Activated CD4-positive, alpha-beta memory T cell treated with anti-CD3 and anti-CD28 coated beads, Interleukin-2, amount 10 ng/mL, durations not matched to agents 7 days and 5 days (primary cell): ENCODE measurements at regions of chr14 and their contacts with region 1.

Region 1: GRCh38 chr14:24710403-24711112 is 76.6 kb upstream of the GZMB start:
- DNase-seq: peak; percentile 69
- H3K4me3 Mint-ChIP-seq: no peak overlapping the region
- H3K27ac Mint-ChIP-seq: no peak overlapping the region
- H3K4me1 Mint-ChIP-seq: no peaks in the 10 kb centered on the region
- H3K27me3 Mint-ChIP-seq: peaks cover 1% of the 10 kb centered on the region

Region 2: GRCh38 chr14:24673534-24674203 is 36.9 kb before region 1 on chr14:
- CTCF ChIA-PET with region 1: interaction called, 16 read pairs
- POLR2A ChIA-PET with region 1: interaction called, 3 read pairs
- DNase-seq: peak; percentile 83
- H3K4me3 Mint-ChIP-seq: peak overlapping the region; percentile 76
- H3K27ac Mint-ChIP-seq: peak overlapping the region; percentile 97
- H3K4me1 Mint-ChIP-seq: peaks cover 88% of the 10 kb centered on the region
- H3K27me3 Mint-ChIP-seq: no peaks in the 10 kb centered on the region

Region 3: GRCh38 chr14:24690492-24690891 is 20.1 kb before region 1 on chr14:
- CTCF ChIA-PET with region 1: interaction called, 21 read pairs
- POLR2A ChIA-PET with region 1: interaction called, 5 read pairs
- DNase-seq: no peak
- H3K4me3 Mint-ChIP-seq: no peak overlapping the region
- H3K27ac Mint-ChIP-seq: no peak overlapping the region
- H3K4me1 Mint-ChIP-seq: peaks cover 31% of the 10 kb centered on the region
- H3K27me3 Mint-ChIP-seq: peaks cover 1% of the 10 kb centered on the region

Region 4: DNA sequence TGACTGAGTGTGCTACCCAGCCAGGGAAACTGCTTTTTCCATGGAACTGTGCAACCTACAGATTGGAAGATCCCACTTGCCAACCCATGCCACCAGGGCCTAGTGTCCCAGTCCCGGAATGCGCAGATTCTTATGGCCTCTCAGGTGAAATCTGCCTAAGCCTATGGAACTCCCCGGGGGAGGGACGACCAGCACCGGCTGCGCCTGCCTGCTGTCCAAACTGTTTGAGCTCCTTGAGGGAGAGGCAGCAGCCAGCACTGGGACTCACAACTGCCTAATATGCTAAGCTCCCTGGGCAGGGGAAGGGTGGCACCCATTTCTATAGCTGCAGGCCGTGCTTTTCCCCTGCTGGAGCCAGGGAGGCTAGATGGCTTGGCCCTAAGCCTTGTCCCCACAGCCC is 15.9 kb after region 1 on chr14:
- CTCF ChIA-PET with region 1: interaction called, 10 read pairs
- POLR2A ChIA-PET with region 1: no interaction called
- DNase-seq: no peak
- H3K4me3 Mint-ChIP-seq: no peak overlapping the region
- H3K27ac Mint-ChIP-seq: no peak overlapping the region
- H3K4me1 Mint-ChIP-seq: peaks cover 3% of the 10 kb centered on the region
- H3K27me3 Mint-ChIP-seq: peaks cover 16% of the 10 kb centered on the region

Region 5: DNA sequence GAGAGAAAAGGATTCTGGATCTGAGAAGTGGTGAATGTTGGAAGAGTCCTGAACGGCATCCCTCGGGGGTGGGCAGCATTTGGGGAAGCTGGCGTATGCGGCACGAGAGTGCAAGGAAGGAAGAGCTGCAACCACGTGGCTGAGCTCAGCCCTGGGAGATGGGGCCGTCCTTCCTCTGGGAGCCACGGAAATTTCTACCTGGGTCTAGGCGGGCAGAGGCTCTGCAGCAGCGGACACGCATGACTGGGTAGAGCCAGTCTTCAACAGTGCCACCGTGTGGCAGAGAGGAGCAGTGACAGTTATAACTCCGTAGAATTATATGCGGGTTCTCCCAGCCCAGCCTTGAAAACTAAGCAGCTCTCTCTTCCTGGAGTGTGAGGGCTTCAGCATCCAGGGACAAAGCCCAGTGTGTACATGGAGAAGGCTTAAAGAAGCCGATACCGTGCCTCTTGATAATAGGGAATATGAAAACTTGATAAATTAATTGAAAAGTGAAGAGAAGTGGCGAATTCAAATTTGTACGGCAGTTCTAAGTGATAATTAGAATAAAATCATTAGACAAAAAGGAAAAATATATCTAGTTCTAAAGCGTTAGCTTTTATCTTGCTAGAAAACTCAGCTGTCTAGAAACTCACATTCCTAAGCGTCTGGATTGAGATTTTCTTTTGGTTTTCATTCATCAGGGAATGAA is 422.3 kb after region 1 on chr14:
- CTCF ChIA-PET with region 1: interaction called, 27 read pairs
- POLR2A ChIA-PET with region 1: no interaction called
- DNase-seq: peak; percentile 52
- H3K4me3 Mint-ChIP-seq: no peak overlapping the region
- H3K27ac Mint-ChIP-seq: no peak overlapping the region
- H3K4me1 Mint-ChIP-seq: no peaks in the 10 kb centered on the region
- H3K27me3 Mint-ChIP-seq: peaks cover 16% of the 10 kb centered on the region